ENCODE measurements at regions of chr2 and their contacts with region 1.

Region 1: DNA sequence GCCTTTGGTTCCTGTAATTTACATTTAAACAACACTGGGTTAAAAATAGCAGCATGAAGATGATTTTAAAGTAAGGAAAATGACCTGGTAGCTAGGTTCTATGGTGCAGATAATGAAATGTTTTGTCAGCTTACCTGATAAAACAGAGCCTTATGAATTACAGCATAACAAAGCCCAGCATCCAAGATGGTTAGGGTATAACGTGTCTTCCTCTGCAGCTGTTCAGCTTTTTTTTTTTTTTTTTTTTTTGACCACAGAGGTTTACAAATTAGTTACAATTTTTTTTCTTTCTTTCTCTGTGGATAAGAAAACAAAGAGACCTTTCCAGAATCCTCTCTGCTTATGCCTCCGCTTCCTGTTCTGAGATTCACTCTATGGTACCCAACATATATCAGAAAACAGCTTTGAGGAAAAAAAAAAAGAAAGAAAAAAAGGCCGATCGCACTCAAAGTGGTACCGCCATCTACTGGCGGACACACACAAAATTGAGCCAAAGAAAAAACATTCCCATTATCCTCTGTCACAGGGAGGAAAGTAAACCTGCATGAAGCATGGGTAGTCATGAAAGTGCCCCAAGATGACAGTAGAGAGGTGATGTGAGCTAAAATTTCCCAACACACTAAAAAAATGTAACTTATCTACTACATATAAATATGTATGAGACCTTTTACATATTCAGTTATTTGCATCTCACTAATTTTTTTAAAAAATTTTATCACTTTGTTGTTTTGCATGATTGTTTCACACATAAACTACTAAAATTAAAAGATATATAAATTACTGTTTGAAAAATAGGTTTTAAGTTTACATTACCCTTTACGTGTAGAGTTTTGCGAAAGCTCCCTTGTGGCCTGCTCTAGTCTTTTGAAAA is at the start of gene SCN3A:
- DNase-seq: peak; percentile 73
- ATAC-seq: peak; percentile 62
- H3K4me3 ChIP-seq: peak within 1 kb of the TSS; percentile 23 to 71 (median 48)
- H3K4me3 Mint-ChIP-seq: peak within 1 kb of the TSS; percentile 68
- H3K27ac ChIP-seq: peak within 1 kb of the TSS in 1 of 2 donors; percentile 53
- H3K27ac Mint-ChIP-seq: peak within 1 kb of the TSS; percentile 12
- H3K4me1 ChIP-seq: peaks cover 9 to 28% of the 10 kb centered on the region in 2 donors
- H3K4me1 Mint-ChIP-seq: peaks cover 27% of the 10 kb centered on the region
- H3K27me3 ChIP-seq: no peaks in the 10 kb centered on the region
- H3K27me3 Mint-ChIP-seq: peaks cover 3% of the 10 kb centered on the region
- CTCF ChIP-seq: peak; percentile 83
- total RNA-seq, gene SCN3A: 6.0 and 6.1 TPM in 2 replicates

Region 2: GRCh38 chr2:164910101-164910899 is 293.6 kb before region 1 on chr2:
- CTCF ChIA-PET with region 1: no interaction called
- POLR2A ChIA-PET with region 1: no interaction called
- intact Hi-C with region 1: loop called (anchors 5 kb)
- DNase-seq: peak; percentile 50
- ATAC-seq: peak; percentile 79
- H3K4me3 ChIP-seq: peak overlapping the region in 1 of 5 experiments; percentile 13
- H3K4me3 Mint-ChIP-seq: peak overlapping the region; percentile 42
- H3K27ac ChIP-seq: peak overlapping the region; percentile 4 to 55
- H3K27ac Mint-ChIP-seq: peak overlapping the region; percentile 73
- H3K4me1 ChIP-seq: peaks cover 23 to 29% of the 10 kb centered on the region in 2 donors
- H3K4me1 Mint-ChIP-seq: peaks cover 36% of the 10 kb centered on the region
- H3K27me3 ChIP-seq: no peaks in the 10 kb centered on the region
- H3K27me3 Mint-ChIP-seq: no peaks in the 10 kb centered on the region
- CTCF ChIP-seq: no peak

Region 3: GRCh38 chr2:165144315-165144714 is 59.6 kb before region 1 on chr2:
- CTCF ChIA-PET with region 1: interaction called, 9 read pairs
- POLR2A ChIA-PET with region 1: no interaction called
- intact Hi-C with region 1: loop called (anchors 5 kb)
- DNase-seq: peak; percentile 39
- ATAC-seq: peak; percentile 56
- H3K4me3 ChIP-seq: no peak overlapping the region
- H3K4me3 Mint-ChIP-seq: no peak overlapping the region
- H3K27ac ChIP-seq: no peak overlapping the region
- H3K27ac Mint-ChIP-seq: no peak overlapping the region
- H3K4me1 ChIP-seq: peaks cover 0 to 7% of the 10 kb centered on the region in 2 donors
- H3K4me1 Mint-ChIP-seq: peaks cover 17% of the 10 kb centered on the region
- H3K27me3 ChIP-seq: no peaks in the 10 kb centered on the region
- H3K27me3 Mint-ChIP-seq: no peaks in the 10 kb centered on the region
- CTCF ChIP-seq: no peak

Region 4: GRCh38 chr2:165185633-165186032 is 18.3 kb before region 1 on chr2:
- CTCF ChIA-PET with region 1: interaction called, 17 read pairs
- POLR2A ChIA-PET with region 1: no interaction called
- intact Hi-C with region 1: no loop called
- DNase-seq: no peak
- ATAC-seq: no peak
- H3K4me3 ChIP-seq: no peak overlapping the region
- H3K4me3 Mint-ChIP-seq: no peak overlapping the region
- H3K27ac ChIP-seq: no peak overlapping the region
- H3K27ac Mint-ChIP-seq: no peak overlapping the region
- H3K4me1 ChIP-seq: no peaks in the 10 kb centered on the region
- H3K4me1 Mint-ChIP-seq: no peaks in the 10 kb centered on the region
- H3K27me3 ChIP-seq: no peaks in the 10 kb centered on the region
- H3K27me3 Mint-ChIP-seq: peaks cover 4% of the 10 kb centered on the region
- CTCF ChIP-seq: no peak

Region 5: DNA sequence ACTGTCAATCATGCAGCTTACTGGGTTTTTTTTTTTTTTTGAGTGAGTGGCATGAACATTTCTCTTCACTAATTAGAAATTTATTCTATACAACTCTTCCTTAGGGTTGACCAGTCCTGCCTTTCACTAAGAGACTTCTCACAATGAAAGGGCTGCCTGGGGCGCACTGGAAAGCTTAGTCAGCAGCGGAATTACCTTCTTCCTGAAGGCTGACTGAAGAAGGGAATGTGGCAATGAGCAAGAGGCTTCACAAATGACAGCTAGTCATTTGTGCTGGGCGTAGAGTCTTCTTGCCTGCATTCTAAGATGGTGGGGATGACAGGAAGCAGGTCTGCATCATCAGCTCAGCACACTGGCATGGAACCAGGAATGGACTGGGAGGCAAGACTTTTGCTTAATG is 15.6 kb after region 1 on chr2:
- CTCF ChIA-PET with region 1: interaction called, 10 read pairs
- POLR2A ChIA-PET with region 1: no interaction called
- intact Hi-C with region 1: no loop called
- DNase-seq: no peak
- ATAC-seq: no peak
- H3K4me3 ChIP-seq: no peak overlapping the region
- H3K4me3 Mint-ChIP-seq: no peak overlapping the region
- H3K27ac ChIP-seq: no peak overlapping the region
- H3K27ac Mint-ChIP-seq: no peak overlapping the region
- H3K4me1 ChIP-seq: no peaks in the 10 kb centered on the region
- H3K4me1 Mint-ChIP-seq: no peaks in the 10 kb centered on the region
- H3K27me3 ChIP-seq: no peaks in the 10 kb centered on the region
- H3K27me3 Mint-ChIP-seq: peaks cover 8% of the 10 kb centered on the region
- CTCF ChIP-seq: no peak

Region 6: GRCh38 chr2:165573534-165574461 is 369.9 kb after region 1 on chr2:
- CTCF ChIA-PET with region 1: no interaction called
- POLR2A ChIA-PET with region 1: no interaction called
- intact Hi-C with region 1: no loop called
- DNase-seq: peak; percentile 11
- ATAC-seq: no peak
- H3K4me3 ChIP-seq: no peak overlapping the region
- H3K4me3 Mint-ChIP-seq: peak overlapping the region; percentile 30
- H3K27ac ChIP-seq: no peak overlapping the region
- H3K27ac Mint-ChIP-seq: no peak overlapping the region
- H3K4me1 ChIP-seq: no peaks in the 10 kb centered on the region
- H3K4me1 Mint-ChIP-seq: peaks cover 7% of the 10 kb centered on the region
- H3K27me3 ChIP-seq: peaks cover 0 to 2% (median 0%) of the 10 kb centered on the region in 4 experiments
- H3K27me3 Mint-ChIP-seq: peaks cover 6% of the 10 kb centered on the region
- CTCF ChIP-seq: no peak

Region 7: DNA sequence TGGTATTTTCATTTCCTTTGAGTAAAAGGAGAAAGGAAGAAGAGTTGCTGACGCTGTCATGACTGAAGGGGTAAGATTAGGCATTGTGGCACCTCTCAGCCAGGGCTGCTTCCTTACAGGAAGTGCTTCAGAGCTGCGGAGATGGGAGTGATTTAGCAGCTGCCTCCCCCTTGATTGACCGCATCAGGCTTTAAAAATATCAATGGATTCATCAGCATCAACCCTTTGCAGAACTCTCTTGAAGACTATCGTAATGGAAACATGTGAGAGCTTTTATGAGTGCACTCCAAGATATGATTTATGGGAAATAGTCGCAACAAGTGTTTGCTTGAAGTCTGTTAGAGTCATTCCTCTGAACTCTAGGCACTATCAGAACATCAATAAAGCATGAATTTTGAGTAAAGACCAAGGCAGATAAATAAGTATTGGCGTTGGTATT is 406.7 kb after region 1 on chr2:
- CTCF ChIA-PET with region 1: no interaction called
- POLR2A ChIA-PET with region 1: no interaction called
- intact Hi-C with region 1: no loop called
- DNase-seq: no peak
- ATAC-seq: no peak
- H3K4me3 ChIP-seq: no peak overlapping the region
- H3K4me3 Mint-ChIP-seq: no peak overlapping the region
- H3K27ac ChIP-seq: no peak overlapping the region
- H3K27ac Mint-ChIP-seq: no peak overlapping the region
- H3K4me1 ChIP-seq: peaks cover 3 to 8% of the 10 kb centered on the region in 2 donors
- H3K4me1 Mint-ChIP-seq: peaks cover 10% of the 10 kb centered on the region
- H3K27me3 ChIP-seq: peaks cover 0 to 3% (median 0%) of the 10 kb centered on the region in 4 experiments
- H3K27me3 Mint-ChIP-seq: peaks cover 12% of the 10 kb centered on the region
- CTCF ChIP-seq: no peak

Measured in B cell (primary cell).